ENCODE measurements at regions of chr9 and their contacts with region 1.

Region 1: GRCh38 chr9:37485389-37486219 is at the start of gene POLR1E:
- DNase-seq: peak; percentile 92 to 99 (median 97)
- ATAC-seq: peak; percentile 100
- H3K4me3 ChIP-seq: peak within 1 kb of the TSS; percentile 82
- H3K4me3 Mint-ChIP-seq: peak within 1 kb of the TSS; percentile 88 to 98 (median 96)
- H3K27ac ChIP-seq: peak within 1 kb of the TSS; percentile 85
- H3K27ac Mint-ChIP-seq: peak within 1 kb of the TSS; percentile 88 to 97 (median 94)
- H3K4me1 ChIP-seq: peaks cover 20% of the 10 kb centered on the region in 2 donors
- H3K4me1 Mint-ChIP-seq: peaks cover 22 to 45% (median 39%) of the 10 kb centered on the region in 7 donors
- H3K27me3 ChIP-seq: no peaks in the 10 kb centered on the region
- H3K27me3 Mint-ChIP-seq: peaks cover 8 to 9% (median 8%) of the 10 kb centered on the region in 5 donors
- total RNA-seq, gene POLR1E: 24.7 to 40.0 (median 31.0) TPM

Region 2: DNA sequence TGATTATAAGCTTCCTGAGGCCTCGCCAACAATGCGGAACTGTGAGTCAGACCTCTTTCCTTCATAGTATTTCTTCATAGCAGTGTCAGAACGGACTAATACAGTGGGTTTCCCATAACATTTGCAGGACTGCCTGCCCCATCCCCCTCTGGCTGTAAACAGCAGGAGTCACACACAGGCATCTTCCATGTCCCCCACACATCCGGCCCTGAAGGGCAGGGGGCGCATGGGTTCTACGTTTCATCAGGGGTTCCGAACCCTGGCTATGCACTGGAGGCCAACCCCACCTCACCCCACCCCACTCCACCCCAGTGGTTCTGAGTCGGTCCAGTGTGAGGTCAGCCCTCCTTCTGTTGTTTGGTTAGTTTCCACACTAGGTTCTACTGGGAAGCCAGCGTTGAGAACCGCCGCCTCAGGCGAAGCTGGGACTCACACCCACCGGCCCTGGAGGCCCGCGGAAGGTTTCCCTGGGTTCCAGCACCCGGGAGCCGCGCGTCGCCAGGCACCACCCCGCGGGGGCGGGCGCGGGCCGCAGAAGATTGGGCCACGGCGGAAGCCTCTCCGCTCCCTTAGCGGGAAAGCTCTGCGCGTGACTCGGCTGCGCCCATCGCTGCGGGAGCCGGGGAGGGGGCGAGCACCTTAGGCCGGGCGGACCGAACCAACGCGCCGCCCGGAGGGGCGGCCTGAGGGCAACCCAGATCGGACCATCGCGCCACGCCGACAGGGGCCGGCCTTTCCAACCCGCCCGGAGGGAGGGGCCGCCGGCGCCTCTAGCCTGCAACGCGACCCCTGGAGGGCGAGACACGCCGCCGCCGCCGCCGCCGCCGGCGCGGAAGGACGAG is 1996.1 kb before region 1 on chr9 and contains the start of gene RUSC2:
- CTCF ChIA-PET with region 1: no interaction called
- POLR2A ChIA-PET with region 1: no interaction called
- intact Hi-C with region 1: no loop called
- DNase-seq: peak; percentile 12 to 75 (median 43)
- ATAC-seq: peak; percentile 84
- H3K4me3 ChIP-seq: peak within 1 kb of the TSS; percentile 54
- H3K4me3 Mint-ChIP-seq: peak within 1 kb of the TSS; percentile 83 to 96 (median 88)
- H3K27ac ChIP-seq: peak within 1 kb of the TSS; percentile 45
- H3K27ac Mint-ChIP-seq: peak within 1 kb of the TSS in 8 of 9 donors; percentile 22 to 78 (median 60)
- H3K4me1 ChIP-seq: peaks cover 0 to 4% of the 10 kb centered on the region in 2 donors
- H3K4me1 Mint-ChIP-seq: peaks cover 19 to 32% (median 28%) of the 10 kb centered on the region in 7 donors
- H3K27me3 ChIP-seq: no peaks in the 10 kb centered on the region
- H3K27me3 Mint-ChIP-seq: peaks cover 0 to 14% (median 0%) of the 10 kb centered on the region in 5 donors
- total RNA-seq, gene RUSC2: 3.1 to 8.3 (median 5.4) TPM

Region 3: DNA sequence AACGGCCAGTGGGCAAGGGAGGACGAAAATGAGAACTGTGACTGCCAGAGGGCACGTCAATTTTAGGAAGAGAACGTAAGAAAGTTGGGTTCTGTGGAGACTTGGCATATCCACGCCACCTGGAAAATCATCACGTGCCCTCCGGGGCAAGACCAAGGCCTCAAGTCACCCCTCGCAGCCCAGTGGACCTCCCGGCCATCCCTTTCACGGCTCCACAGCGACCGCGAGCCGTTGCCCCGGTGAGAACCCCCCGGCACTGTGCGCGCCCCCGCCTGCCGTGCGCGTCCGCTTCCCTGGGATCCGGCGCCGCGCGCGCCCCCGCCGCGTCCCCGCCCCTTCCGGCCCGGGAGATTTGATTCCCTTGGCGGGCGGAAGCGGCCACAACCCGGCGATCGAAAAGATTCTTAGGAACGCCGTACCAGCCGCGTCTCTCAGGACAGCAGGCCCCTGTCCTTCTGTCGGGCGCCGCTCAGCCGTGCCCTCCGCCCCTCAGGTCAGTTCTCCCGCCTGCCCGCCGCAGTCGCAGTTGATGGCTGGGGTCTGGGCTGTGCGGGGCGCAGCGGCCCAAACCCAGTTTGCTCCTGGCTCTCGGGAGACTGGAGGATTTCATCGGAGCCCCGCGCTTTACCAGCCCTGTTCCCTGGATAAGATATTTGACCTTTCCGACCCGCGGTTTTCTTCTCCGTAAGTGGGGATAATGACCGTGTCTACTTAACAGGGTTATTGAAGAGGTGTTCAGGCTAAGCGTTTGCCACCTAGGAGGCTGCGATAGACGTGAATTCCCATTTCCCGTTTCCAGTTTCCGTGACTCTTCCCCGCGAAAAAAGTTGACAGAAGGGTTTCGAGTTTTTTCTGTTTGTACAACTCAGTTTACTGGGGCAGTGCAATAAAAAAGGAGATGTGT is 912.8 kb before region 1 on chr9 and contains the start of gene MELK:
- CTCF ChIA-PET with region 1: no interaction called
- POLR2A ChIA-PET with region 1: no interaction called
- intact Hi-C with region 1: loop called in 1 of 2 experiments (anchors 10 kb)
- DNase-seq: peak; percentile 69 to 94 (median 82)
- ATAC-seq: peak; percentile 97
- H3K4me3 ChIP-seq: peak within 1 kb of the TSS; percentile 83
- H3K4me3 Mint-ChIP-seq: peak within 1 kb of the TSS; percentile 88 to 95 (median 90)
- H3K27ac ChIP-seq: peak within 1 kb of the TSS; percentile 76
- H3K27ac Mint-ChIP-seq: peak within 1 kb of the TSS; percentile 62 to 90 (median 83)
- H3K4me1 ChIP-seq: peaks cover 0 to 5% of the 10 kb centered on the region in 2 donors
- H3K4me1 Mint-ChIP-seq: peaks cover 7 to 38% (median 13%) of the 10 kb centered on the region in 7 donors
- H3K27me3 ChIP-seq: no peaks in the 10 kb centered on the region
- H3K27me3 Mint-ChIP-seq: peaks cover 0 to 5% (median 0%) of the 10 kb centered on the region in 5 donors
- total RNA-seq, gene MELK: 0.22 to 40.2 (median 0.88) TPM in 3 of 5 experiments, not detected in the others

Region 4: DNA sequence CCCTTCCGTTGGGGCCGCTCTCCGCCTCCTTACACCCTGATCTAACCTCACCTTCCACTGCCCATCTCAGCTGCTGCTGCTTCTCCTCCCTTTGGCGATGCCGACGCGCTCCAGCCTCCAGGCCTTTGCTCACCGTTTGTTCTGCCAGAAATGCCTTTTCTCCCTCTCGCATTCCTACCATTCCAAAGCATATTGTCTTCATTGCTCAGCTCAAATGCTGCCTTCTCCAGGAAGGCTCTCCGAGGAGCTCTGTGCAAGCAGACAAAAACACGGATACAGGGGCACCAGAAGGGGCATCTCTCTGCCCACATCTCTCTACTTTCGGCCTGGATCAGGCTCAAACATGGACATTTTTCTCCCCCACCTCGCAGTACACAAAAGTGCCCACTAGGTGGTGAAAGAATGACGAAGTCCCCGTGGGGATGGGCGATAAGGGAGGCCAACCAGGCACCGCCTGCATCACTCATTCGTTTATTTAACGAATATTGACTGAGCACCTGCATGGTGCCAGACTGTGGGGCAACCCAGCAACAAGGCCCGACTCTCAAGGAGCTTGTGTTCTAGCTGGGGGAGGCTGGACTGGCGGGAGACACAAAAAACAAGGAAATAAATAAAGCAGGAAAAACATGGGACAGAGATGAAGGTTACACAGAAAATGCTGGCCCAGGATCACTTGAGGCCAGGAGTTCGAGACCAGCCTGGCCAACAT is 70.4 kb before region 1 on chr9:
- CTCF ChIA-PET with region 1: interaction called, 3 read pairs
- POLR2A ChIA-PET with region 1: interaction called, 5 read pairs
- intact Hi-C with region 1: loop called in 1 of 2 experiments (anchors 1 kb)
- DNase-seq: peak; percentile 55 to 77 (median 70)
- ATAC-seq: peak; percentile 94
- H3K4me3 ChIP-seq: no peak overlapping the region
- H3K4me3 Mint-ChIP-seq: peak overlapping the region in 7 of 10 donors; percentile 27 to 72 (median 49)
- H3K27ac ChIP-seq: no peak overlapping the region
- H3K27ac Mint-ChIP-seq: peak overlapping the region in 4 of 9 donors; percentile 76 to 92 (median 84)
- H3K4me1 ChIP-seq: no peaks in the 10 kb centered on the region
- H3K4me1 Mint-ChIP-seq: peaks cover 5 to 11% (median 7%) of the 10 kb centered on the region in 7 donors
- H3K27me3 ChIP-seq: no peaks in the 10 kb centered on the region
- H3K27me3 Mint-ChIP-seq: peaks cover 0 to 7% (median 5%) of the 10 kb centered on the region in 5 donors

Region 5: GRCh38 chr9:37430841-37431597 is 54.6 kb before region 1 on chr9:
- CTCF ChIA-PET with region 1: no interaction called
- POLR2A ChIA-PET with region 1: no interaction called
- intact Hi-C with region 1: no loop called
- DNase-seq: no peak
- ATAC-seq: no peak
- H3K4me3 ChIP-seq: no peak overlapping the region
- H3K4me3 Mint-ChIP-seq: no peak overlapping the region
- H3K27ac ChIP-seq: no peak overlapping the region
- H3K27ac Mint-ChIP-seq: peak overlapping the region in 2 of 9 donors; percentile 11 to 53
- H3K4me1 ChIP-seq: no peaks in the 10 kb centered on the region
- H3K4me1 Mint-ChIP-seq: peaks cover 0 to 5% (median 4%) of the 10 kb centered on the region in 7 donors
- H3K27me3 ChIP-seq: no peaks in the 10 kb centered on the region
- H3K27me3 Mint-ChIP-seq: no peaks in the 10 kb centered on the region

Region 6: GRCh38 chr9:37471942-37472679 is 13.5 kb before region 1 on chr9:
- CTCF ChIA-PET with region 1: no interaction called
- POLR2A ChIA-PET with region 1: interaction called, 52 read pairs
- intact Hi-C with region 1: no loop called
- DNase-seq: peak in 1 of 9 donors; percentile 9
- ATAC-seq: no peak
- H3K4me3 ChIP-seq: peak overlapping the region; percentile 9
- H3K4me3 Mint-ChIP-seq: peak overlapping the region; percentile 70 to 90 (median 80)
- H3K27ac ChIP-seq: peak overlapping the region; percentile 46
- H3K27ac Mint-ChIP-seq: peak overlapping the region; percentile 63 to 95 (median 84)
- H3K4me1 ChIP-seq: no peaks in the 10 kb centered on the region
- H3K4me1 Mint-ChIP-seq: peaks cover 3 to 14% (median 13%) of the 10 kb centered on the region in 7 donors
- H3K27me3 ChIP-seq: no peaks in the 10 kb centered on the region
- H3K27me3 Mint-ChIP-seq: peaks cover 0 to 10% (median 7%) of the 10 kb centered on the region in 5 donors

Region 7: DNA sequence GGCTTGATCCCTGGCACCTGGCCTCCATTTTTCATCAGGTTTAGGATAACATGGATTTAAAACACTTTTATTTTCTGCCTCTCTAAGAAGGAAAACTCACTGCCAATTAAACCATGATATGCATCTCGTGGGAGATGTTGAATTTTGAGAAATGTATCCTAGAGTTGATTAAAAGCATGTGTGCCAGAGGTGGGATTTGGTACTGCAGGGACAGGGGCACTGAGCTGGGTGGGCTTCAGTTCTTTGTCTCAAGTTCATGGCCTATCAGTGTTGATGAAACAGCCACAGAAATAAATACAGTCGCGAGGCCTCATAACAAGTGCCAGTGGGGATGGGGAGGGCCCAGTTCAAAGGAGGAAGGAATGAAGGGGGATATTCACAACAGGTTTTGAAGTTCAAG is 35.0 kb after region 1 on chr9:
- CTCF ChIA-PET with region 1: no interaction called
- POLR2A ChIA-PET with region 1: no interaction called
- intact Hi-C with region 1: no loop called
- DNase-seq: no peak
- ATAC-seq: no peak
- H3K4me3 ChIP-seq: no peak overlapping the region
- H3K4me3 Mint-ChIP-seq: no peak overlapping the region
- H3K27ac ChIP-seq: no peak overlapping the region
- H3K27ac Mint-ChIP-seq: peak overlapping the region in 1 of 9 donors; percentile 87
- H3K4me1 ChIP-seq: no peaks in the 10 kb centered on the region
- H3K4me1 Mint-ChIP-seq: no peaks in the 10 kb centered on the region
- H3K27me3 ChIP-seq: no peaks in the 10 kb centered on the region
- H3K27me3 Mint-ChIP-seq: no peaks in the 10 kb centered on the region

Region 8: DNA sequence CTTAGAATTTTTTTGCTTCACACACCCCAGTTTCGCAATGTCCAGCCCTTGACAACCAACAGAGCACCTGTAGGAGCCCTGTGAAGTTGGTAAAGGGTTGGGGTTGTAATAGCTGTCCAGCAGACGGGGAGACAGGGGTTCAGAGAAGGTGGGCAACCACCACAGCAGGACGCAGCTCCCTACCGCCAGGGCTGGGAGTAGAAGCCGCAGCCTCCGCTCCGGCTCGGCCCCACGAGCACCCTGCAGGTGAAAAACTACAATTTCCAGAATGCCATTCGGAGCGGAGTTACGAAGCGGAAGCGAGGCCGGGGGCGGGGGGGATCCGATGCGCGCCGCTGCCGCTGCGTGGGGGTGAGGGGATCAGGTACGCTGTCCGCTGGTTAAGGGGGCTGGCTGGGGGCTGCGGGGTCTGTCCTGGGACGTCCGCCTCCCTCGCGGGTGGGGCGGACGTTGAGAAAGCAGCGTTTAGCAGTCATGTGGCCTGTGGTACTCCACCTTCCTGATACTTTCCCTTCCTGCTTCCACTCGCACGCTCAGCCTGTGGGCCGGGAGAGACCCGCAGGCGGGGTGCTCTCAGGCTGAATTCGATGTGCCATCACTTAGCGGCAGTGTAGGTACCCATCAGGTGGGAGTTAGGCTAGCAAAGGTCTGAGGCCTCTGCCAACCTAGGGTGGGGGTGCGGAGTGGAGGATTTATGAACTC is 268.0 kb after region 1 on chr9 and contains the start of gene TRMT10B:
- CTCF ChIA-PET with region 1: no interaction called
- POLR2A ChIA-PET with region 1: no interaction called
- intact Hi-C with region 1: loop called (anchors 1 to 5 kb)
- DNase-seq: peak; percentile 50 to 78 (median 70)
- ATAC-seq: peak; percentile 95
- H3K4me3 ChIP-seq: peak within 1 kb of the TSS; percentile 92
- H3K4me3 Mint-ChIP-seq: peak within 1 kb of the TSS; percentile 87 to 98 (median 96)
- H3K27ac ChIP-seq: peak within 1 kb of the TSS; percentile 87
- H3K27ac Mint-ChIP-seq: peak within 1 kb of the TSS; percentile 68 to 95 (median 92)
- H3K4me1 ChIP-seq: peaks cover 9 to 11% of the 10 kb centered on the region in 2 donors
- H3K4me1 Mint-ChIP-seq: peaks cover 26 to 52% (median 33%) of the 10 kb centered on the region in 7 donors
- H3K27me3 ChIP-seq: no peaks in the 10 kb centered on the region
- H3K27me3 Mint-ChIP-seq: no peaks in the 10 kb centered on the region
- total RNA-seq, gene TRMT10B: 16.0 to 28.9 (median 18.5) TPM

Region 9: GRCh38 chr9:37913480-37914153 is 428.0 kb after region 1 on chr9:
- CTCF ChIA-PET with region 1: interaction called, 3 read pairs
- POLR2A ChIA-PET with region 1: no interaction called
- intact Hi-C with region 1: loop called in 1 of 2 experiments (anchors 5 kb)
- DNase-seq: peak; percentile 54 to 85 (median 65)
- ATAC-seq: peak; percentile 89
- H3K4me3 ChIP-seq: no peak overlapping the region
- H3K4me3 Mint-ChIP-seq: no peak overlapping the region
- H3K27ac ChIP-seq: no peak overlapping the region
- H3K27ac Mint-ChIP-seq: peak overlapping the region in 1 of 9 donors; percentile 59
- H3K4me1 ChIP-seq: no peaks in the 10 kb centered on the region
- H3K4me1 Mint-ChIP-seq: peaks cover 0 to 7% (median 4%) of the 10 kb centered on the region in 7 donors
- H3K27me3 ChIP-seq: no peaks in the 10 kb centered on the region
- H3K27me3 Mint-ChIP-seq: peaks cover 0 to 4% (median 0%) of the 10 kb centered on the region in 5 donors